PC-9 (cell line): ENCODE measurements at regions of chr22 and their contacts with region 1.

Region 1: DNA sequence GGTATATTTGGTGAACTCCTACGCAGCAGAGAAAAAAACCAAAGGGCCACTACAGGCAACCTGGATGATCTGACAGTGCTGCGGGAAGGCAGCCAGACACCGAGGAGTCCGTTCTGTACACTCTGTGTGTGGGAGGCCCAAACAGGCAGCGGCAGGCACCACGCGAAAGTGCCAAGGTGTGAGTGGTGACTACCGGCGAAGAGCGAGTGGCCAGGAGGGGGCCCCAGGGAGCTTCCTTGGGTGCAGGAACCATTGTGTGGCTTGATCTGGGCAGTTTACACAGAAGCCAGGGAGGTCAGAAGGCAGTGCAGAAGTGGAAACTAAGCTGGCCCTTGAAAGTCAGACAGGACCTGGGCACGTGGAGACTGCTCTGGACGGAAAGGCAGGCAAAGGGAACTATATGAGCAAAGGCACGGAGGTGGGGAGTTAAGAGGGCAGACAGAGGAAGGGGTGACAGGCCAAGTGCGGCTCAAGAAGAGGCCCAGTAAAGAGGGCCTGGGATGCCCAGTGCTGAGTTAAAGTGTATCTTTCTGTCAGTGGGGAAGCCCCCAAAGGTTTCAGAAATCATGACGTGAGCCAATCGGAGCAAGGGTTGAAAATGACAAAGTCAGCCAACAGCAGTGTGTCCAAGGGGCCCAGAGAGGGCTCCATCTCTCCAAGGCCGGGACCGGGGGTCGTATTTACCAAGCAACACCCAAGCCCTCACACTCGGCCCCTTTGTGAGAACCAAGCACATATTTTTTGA is 10.6 kb downstream of the TMEM184B start:
- DNase-seq: peak; percentile 46 to 54
- H3K4me3 ChIP-seq: no peak overlapping the region
- H3K27ac ChIP-seq: no peak overlapping the region
- H3K4me1 ChIP-seq: no peaks in the 10 kb centered on the region
- H3K27me3 ChIP-seq: no peaks in the 10 kb centered on the region
- CTCF ChIP-seq: peak; percentile 81

Region 2: DNA sequence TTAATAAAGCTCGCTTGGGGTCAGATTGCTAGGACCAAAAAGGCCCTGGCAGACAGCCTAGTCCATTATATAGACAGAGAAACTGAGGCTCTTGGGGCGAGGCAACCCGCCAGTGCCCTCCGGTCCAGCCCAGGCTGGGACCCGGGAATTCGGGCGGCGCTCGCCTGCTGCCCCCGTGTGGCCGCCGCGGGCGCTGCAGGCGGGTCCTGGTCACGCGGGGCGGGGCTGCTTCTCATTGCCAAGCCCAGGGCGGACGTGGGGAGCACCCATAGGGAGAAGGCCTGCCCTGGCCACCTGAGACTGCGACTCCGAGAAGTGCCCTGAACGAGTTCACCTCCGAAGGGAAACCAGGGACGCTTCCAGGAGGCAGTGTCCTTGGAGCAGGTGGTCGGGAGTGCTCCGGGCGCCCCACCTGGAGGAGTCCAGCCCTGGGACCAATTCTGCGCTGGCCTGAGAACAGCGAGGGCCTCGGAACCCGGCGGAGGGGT is 91.0 kb after region 1 on chr22:
- CTCF ChIA-PET with region 1: no interaction called
- POLR2A ChIA-PET with region 1: no interaction called
- intact Hi-C with region 1: loop called (anchors 2 kb)
- DNase-seq: peak; percentile 42 to 85
- H3K4me3 ChIP-seq: no peak overlapping the region
- H3K27ac ChIP-seq: no peak overlapping the region
- H3K4me1 ChIP-seq: peaks cover 8% of the 10 kb centered on the region
- H3K27me3 ChIP-seq: no peaks in the 10 kb centered on the region
- CTCF ChIP-seq: peak; percentile 100

Region 3: DNA sequence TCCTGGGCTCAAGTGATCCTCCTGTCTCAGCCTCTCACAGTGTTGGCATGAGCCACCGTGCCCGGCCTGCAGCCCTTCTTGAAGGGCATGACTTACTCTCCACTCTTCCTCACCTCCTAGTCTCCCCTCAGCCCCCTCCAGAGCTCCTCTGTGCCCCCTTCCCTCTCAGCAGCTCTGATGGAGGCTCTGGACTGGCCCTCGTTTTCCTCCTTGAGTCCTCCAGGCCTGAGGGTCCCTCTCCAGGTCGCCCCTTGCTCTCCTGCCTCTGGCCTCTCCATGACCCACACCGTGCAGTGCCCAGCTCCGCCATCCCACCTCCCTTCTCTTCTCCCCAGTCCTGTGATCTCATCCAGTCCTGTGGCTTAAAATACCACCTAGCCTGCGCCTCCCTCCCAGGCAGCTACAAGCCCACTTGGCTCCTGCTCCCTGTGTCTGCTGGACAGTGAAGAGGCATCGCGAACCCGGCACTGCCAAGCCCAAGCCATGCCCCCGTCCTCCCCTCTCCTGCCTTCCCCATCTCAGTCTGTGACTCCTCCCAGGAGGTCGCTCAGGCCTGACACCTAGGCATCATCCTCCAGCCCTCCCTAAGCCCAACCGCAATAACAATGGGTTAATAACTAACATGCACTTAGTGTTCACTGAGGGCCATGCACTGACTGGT is 180.9 kb after region 1 on chr22:
- CTCF ChIA-PET with region 1: interaction called, 10 read pairs
- POLR2A ChIA-PET with region 1: no interaction called
- intact Hi-C with region 1: no loop called
- DNase-seq: no peak
- H3K4me3 ChIP-seq: no peak overlapping the region
- H3K27ac ChIP-seq: no peak overlapping the region
- H3K4me1 ChIP-seq: no peaks in the 10 kb centered on the region
- H3K27me3 ChIP-seq: peaks cover 33% of the 10 kb centered on the region; the same call in 1 of the 2 replicates
- CTCF ChIP-seq: no peak